ENCODE measurements at regions of chr12 and their contacts with region 1.

Region 1: DNA sequence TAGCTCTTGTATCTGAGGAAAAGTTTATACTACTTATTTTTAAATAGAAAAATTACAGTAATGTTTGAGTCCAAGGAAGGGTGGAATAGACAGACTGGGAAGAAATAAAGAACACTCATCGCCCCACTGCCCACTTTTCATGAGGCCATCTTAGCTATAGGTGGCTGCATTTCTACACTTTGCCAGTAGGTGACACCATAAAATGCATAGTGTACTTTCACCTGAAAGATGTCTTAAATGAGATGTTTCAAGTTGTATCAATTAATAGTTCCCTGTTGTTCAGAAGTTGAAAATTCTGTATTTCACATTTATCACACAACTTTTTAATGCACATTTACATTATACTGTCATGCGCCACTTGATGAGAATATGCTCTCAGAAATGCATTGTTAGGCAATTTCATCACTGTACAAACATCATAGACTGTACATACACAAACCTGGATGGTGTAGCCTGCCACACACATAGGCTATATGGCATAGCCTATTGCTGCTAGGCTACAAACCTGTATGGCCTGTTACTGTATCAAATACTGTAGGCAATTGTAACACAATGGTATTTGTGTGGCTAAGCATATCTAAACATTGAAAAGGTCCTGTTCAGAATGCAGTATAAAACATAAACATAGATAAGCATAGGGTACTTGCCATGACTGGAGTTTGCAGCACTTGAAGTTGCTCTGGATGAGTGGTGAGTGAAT is 27.6 kb downstream of the PMCH start:
- DNase-seq: peak; percentile 74
- H3K4me3 Mint-ChIP-seq: no peak overlapping the region
- H3K27ac Mint-ChIP-seq: no peak overlapping the region
- H3K4me1 Mint-ChIP-seq: peaks cover 20% of the 10 kb centered on the region
- H3K27me3 Mint-ChIP-seq: no peaks in the 10 kb centered on the region

Region 2: DNA sequence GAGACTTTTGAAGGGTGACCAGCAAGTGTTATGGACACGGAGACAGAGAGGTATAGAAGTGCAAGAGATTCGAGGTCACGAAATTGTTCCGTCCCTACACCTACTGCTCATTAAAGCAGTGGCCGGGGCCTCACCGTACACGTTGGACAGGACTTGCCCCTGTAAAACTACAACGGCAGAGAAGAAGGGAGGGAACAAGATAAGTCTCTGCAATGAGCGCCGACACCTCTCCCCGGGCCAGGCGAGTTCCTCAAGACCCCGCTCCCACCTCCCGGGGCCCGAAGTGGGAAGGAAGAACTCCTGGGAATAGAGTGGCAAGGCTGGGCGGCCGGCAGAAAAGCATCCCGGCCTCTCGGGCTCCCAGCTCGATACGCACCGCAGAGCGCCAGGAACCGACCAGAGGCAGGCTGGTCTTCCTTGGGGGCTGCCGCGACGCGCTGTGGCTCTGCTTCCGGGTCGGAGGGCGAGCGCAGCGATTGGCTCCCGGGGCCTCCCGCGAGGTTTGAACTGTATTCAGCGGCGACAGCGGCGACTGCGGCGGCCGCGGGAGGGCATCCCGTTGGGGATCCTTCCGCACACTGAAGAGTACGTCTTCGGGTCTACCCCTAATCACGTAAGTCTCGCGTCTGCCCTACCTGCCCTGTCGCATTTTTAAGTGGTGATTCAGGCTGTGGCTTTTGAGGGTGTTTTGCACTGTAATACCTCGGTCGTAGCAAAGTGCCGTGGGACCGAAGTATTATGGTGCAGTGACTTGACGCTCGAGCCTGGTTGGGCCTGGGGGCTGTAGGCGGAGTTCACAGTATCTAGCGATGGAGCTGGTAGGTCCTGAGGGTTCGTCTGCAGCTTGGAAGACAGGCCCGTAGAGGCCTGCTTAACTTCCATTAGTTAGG is 50.2 kb before region 1 on chr12 and contains the starts of genes NUP37 and PARPBP:
- intact Hi-C with region 1: loop called (anchors 5 kb)
- DNase-seq: peak; percentile 98
- H3K4me3 Mint-ChIP-seq: peak within 1 kb of the TSS; percentile 96
- H3K27ac Mint-ChIP-seq: peak within 1 kb of the TSS; percentile 94
- H3K4me1 Mint-ChIP-seq: peaks cover 35% of the 10 kb centered on the region
- H3K27me3 Mint-ChIP-seq: no peaks in the 10 kb centered on the region
- total RNA-seq, gene NUP37: 88.1 and 97.3 TPM in 2 replicates
- total RNA-seq, gene PARPBP: 22.9 TPM in 2 replicates

Region 3: DNA sequence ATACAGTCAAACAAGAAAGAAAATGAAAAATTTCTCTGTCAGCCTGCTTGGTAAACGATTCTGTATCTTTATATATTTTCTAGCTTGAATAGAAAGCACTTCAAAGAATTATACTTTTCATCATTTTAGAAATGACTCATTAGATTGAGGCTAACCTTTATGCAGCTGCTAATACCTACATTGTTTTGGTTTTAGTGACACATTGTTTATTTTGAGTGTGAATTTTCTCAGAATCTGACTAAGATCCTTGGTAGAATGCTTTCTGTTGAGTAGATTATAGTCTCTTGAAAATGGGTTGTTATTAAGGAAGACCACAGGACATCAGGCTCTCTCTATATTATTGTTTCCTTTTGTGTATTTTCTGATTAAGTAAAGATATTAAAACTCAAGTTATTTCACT is 27.7 kb after region 1 on chr12 and contains the start of gene PMCH:
- intact Hi-C with region 1: loop called (anchors 1 kb)
- DNase-seq: no peak
- H3K4me3 Mint-ChIP-seq: peak within 1 kb of the TSS; percentile 35
- H3K27ac Mint-ChIP-seq: peak within 1 kb of the TSS; percentile 87
- H3K4me1 Mint-ChIP-seq: peaks cover 17% of the 10 kb centered on the region
- H3K27me3 Mint-ChIP-seq: no peaks in the 10 kb centered on the region
- total RNA-seq, gene PMCH: 6.3 and 8.4 TPM in 2 replicates

Region 4: GRCh38 chr12:102702447-102703114 is 532.5 kb after region 1 on chr12:
- intact Hi-C with region 1: loop called (anchors 5 kb)
- DNase-seq: peak; percentile 78
- H3K4me3 Mint-ChIP-seq: no peak overlapping the region
- H3K27ac Mint-ChIP-seq: no peak overlapping the region
- H3K4me1 Mint-ChIP-seq: no peaks in the 10 kb centered on the region
- H3K27me3 Mint-ChIP-seq: peaks cover 22% of the 10 kb centered on the region